Cardiac septum (tissue), 1 donor: ENCODE measurements at regions of chr9 and their contacts with region 1.

Region 1: GRCh38 chr9:72013292-72013760 is 47.1 kb downstream of the C9orf57 start:
- DNase-seq: no peak

Region 2: DNA sequence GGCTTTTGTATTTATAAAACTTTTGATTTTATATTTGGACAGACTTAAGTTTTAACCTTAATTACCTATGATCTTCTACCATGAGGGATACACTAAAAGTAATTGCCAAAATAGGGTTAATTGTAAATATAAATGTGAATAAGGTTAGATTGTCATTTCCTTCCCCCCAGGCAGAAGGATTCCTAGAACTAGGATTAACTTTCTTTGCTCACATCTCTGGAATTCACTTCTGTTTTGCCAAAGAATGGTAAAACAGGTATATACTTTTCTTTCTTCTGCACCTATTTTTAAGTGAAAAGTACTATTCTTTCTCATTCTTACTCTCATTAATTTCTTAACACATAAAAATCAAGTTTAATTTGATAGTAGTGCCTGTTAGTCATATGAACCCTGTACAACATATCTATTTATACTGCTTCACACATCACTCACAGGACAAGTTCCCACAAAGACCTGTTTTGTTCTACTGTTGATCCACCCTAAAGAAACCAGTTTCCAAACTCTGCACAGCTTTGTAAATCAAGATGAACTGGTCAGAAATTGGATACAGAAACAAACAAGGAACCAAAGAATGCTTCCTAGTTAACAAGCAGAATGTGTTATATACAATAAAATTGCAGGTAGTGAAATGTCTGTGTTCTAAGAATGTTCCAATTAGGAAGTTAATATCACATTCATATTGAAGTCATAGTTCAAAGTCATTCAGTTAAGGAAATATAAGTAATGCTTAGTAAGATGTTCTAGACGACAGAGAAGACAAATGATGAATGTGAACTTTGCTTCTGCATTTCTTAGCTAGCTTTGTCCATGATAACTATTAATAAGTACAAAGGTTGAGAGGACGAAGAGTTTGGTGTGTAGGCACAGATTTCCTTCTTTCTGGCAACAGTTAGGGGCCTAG is 68.6 kb before region 1 on chr9:
- intact Hi-C with region 1: no loop called
- DNase-seq: no peak

Region 3: DNA sequence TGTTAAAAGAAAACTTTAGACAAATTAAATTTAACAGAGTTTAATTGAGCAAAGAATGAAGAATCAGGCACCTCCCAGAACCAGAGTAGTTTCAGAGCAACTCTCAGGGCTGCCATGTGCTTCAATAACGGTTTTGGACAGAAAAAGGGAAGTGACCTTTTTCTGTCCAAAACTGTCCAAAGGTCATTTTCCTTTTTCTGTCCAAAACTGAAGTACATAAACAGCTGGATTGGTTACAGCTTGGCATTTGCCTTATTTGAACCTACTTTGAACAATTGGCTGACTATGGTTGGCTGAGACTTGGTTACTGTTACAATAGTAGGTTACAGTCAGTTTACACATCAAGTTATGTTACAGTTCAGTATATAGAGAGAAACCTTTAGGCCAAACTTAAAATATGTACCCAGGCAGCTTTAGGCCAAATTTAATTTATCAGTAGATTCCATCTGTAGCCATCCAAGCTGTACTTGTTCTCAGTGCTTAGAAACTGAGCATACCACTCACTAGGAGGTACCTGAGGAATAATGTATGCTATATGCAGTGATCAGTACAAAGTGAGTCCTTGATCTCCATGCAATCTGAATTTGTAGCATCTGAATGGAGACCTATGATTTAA is 57.9 kb before region 1 on chr9:
- intact Hi-C with region 1: loop called (anchors 10 kb)
- DNase-seq: no peak